AG04450 (cell line): ENCODE measurements at regions of chr12 and their contacts with region 1.

Region 1: GRCh38 chr12:75505706-75506312 is 5.6 kb downstream of the KRR1 start:
- DNase-seq: no peak
- H3K4me3 ChIP-seq: no peak overlapping the region
- H3K27ac ChIP-seq: no peak overlapping the region
- H3K27me3 ChIP-seq: no peaks in the 10 kb centered on the region
- CTCF ChIP-seq: peak; percentile 74

Region 2: GRCh38 chr12:75480469-75480949 is 25.3 kb before region 1 on chr12 and contains the start of gene GLIPR1:
- CTCF ChIA-PET with region 1: interaction called, 11 read pairs
- POLR2A ChIA-PET with region 1: interaction called, 4 read pairs
- DNase-seq: peak; percentile 97
- H3K4me3 ChIP-seq: peak within 1 kb of the TSS; percentile 73
- H3K27ac ChIP-seq: peak within 1 kb of the TSS; percentile 89
- H3K27me3 ChIP-seq: no peaks in the 10 kb centered on the region
- CTCF ChIP-seq: no peak
- polyA plus RNA-seq, gene GLIPR1: 299 and 335 TPM in 2 replicates